B cell (primary cell): ENCODE measurements at regions of chr19 and their contacts with region 1.

Region 1: DNA sequence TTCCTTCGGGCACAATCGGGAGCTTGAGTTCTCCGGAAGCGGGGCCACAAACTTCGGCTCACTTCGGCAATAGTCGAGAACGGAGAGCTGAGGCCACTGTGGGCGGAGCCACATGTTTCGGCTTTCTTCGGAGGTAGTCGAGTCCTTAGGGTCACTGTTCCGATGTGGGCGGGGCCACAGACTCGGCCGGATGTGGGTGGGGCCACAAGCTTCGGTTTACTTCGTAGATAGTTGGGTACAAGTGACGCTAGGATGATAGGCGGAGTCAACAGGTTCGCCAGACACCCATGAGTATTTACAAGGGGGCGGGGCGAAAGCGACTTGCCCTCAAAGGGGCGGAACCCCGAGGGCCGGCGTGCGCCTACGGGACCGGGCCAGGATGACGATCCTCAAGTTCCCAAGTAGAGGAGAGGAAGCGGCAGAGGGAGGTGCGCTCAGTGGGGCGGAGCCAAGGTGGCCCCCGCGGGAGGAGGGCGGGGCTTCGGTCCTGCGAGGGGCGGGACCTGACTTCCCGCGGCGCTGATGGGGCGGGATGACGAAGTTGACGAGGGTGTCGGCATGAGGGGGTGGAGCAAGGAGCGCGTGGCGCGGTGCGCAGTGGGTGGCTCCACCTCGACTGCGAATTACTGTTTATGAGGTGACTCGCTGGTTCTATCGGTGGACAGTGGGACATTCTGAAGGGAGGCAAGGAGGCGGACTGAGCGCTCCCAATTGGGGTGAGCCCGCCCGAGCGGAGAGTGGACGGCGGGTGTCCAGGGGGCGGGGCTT is 539 bp upstream of the MBOAT7 start:
- DNase-seq: peak; percentile 100
- ATAC-seq: peak; percentile 51
- H3K4me3 ChIP-seq: peak overlapping the region; percentile 31 to 87 (median 81)
- H3K4me3 Mint-ChIP-seq: peak overlapping the region; percentile 94
- H3K27ac ChIP-seq: peak overlapping the region; percentile 96 to 99
- H3K27ac Mint-ChIP-seq: peak overlapping the region; percentile 99
- H3K4me1 ChIP-seq: peaks cover 18 to 22% of the 10 kb centered on the region in 2 donors
- H3K4me1 Mint-ChIP-seq: peaks cover 32% of the 10 kb centered on the region
- H3K27me3 ChIP-seq: no peaks in the 10 kb centered on the region
- H3K27me3 Mint-ChIP-seq: no peaks in the 10 kb centered on the region
- CTCF ChIP-seq: no peak

Region 2: DNA sequence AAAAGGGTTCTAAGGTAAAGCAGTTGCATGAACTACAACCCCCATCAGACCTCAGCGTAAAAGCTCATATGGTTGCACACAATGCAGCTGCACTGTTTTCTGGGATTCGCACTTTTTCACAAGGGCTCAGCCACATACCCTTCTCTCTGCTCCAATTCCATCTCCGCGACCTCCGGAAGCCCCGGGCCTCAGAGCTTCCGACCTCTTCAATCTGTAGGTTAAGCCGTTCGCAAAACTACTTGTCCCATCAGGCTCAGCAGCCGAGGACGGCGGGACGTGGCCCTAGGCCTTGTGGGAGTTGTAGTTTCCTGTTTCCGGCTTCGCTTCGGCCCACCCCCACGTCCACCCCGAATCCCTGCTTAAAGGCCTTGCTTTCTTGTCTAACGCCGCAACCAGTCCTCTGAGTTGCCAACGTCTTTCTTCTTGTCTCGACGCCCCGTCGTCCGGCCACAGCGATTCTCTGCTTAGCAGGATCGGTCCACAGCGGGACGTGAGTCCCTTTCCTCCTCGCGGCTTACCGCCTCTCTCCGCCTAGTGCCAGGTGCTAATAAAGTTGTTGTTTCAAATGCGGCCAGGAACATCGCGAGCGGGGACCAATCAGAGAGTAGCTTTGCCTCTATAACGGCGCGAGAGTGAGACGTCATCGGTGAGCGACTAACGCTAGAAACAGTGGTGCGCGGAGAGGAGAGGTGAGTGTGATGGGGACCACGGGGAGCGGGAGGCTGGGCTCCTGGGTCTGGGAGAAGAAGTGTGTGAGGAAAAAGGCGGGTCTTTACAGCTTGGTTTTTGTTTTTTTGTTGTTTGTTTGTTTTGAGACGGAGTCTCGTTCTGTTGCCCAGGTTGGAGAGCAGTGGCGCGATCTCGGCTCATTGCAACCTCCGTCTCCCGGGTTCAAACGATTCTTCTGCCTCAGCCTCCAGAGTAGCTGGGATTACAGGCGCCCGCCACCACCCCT is 74.5 kb before region 1 on chr19 and contains the starts of genes PRPF31 and TFPT:
- CTCF ChIA-PET with region 1: interaction called, 3 read pairs
- POLR2A ChIA-PET with region 1: interaction called, 7 read pairs
- intact Hi-C with region 1: loop called (anchors 1 kb)
- DNase-seq: peak; percentile 99
- ATAC-seq: peak; percentile 93
- H3K4me3 ChIP-seq: peak within 1 kb of the TSS; percentile 71 to 86 (median 81)
- H3K4me3 Mint-ChIP-seq: peak within 1 kb of the TSS; percentile 89
- H3K27ac ChIP-seq: peak within 1 kb of the TSS; percentile 76 to 78
- H3K27ac Mint-ChIP-seq: peak within 1 kb of the TSS; percentile 87
- H3K4me1 ChIP-seq: peaks cover 14 to 25% of the 10 kb centered on the region in 2 donors
- H3K4me1 Mint-ChIP-seq: peaks cover 31% of the 10 kb centered on the region
- H3K27me3 ChIP-seq: no peaks in the 10 kb centered on the region
- H3K27me3 Mint-ChIP-seq: no peaks in the 10 kb centered on the region
- CTCF ChIP-seq: no peak
- total RNA-seq, gene PRPF31: 65.4 and 66.2 TPM in 2 replicates
- total RNA-seq, gene TFPT: 10.4 and 12.7 TPM in 2 replicates

Region 3: DNA sequence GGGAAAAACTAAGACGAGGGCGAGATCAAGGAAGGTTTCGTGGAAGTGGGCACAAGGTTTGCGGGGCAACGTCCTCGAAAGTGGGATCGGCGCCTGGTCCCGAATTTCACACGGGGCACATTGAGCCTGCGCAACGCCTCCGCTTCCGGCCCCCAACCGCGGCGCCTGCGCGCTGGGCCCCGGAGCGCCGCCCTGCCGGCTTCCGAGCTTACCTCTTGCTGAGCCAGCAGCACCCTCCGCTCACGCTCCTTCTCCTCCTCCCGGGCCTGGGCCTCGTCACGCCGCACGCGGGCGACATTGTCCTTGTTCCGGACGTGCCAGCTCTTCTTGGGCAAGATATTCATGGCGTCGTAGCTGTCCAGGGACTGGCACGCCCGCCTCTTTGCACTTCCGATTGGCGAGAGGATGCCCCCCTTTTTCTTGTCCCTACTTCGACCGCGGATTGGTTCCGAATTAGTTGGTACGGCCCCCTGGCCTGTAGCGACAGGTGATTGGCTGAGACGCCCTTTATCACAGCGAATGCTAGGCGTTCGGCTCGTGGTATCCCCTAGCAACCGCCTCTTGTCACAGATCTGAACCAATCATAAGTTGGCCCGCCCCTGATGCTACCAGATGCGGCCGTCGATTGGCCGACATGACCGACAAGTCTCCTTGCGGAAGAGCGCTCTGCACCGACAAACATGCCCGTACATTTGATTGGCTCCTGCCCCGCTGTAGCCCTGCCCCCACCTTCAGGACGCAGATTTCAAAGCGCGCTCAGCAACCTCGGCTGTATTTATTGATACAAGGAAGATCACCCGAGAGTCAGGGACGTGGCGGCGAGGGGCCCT is 30.4 kb before region 1 on chr19 and contains the start of gene LENG1:
- CTCF ChIA-PET with region 1: interaction called, 8 read pairs
- POLR2A ChIA-PET with region 1: interaction called, 17 read pairs
- intact Hi-C with region 1: loop called (anchors 1 kb)
- DNase-seq: peak; percentile 100
- ATAC-seq: peak; percentile 87
- H3K4me3 ChIP-seq: peak within 1 kb of the TSS; percentile 67 to 95 (median 79)
- H3K4me3 Mint-ChIP-seq: peak within 1 kb of the TSS; percentile 100
- H3K27ac ChIP-seq: peak within 1 kb of the TSS; percentile 75 to 82
- H3K27ac Mint-ChIP-seq: peak within 1 kb of the TSS; percentile 100
- H3K4me1 ChIP-seq: peaks cover 35 to 48% of the 10 kb centered on the region in 2 donors
- H3K4me1 Mint-ChIP-seq: peaks cover 45% of the 10 kb centered on the region
- H3K27me3 ChIP-seq: peaks cover 0 to 6% (median 3%) of the 10 kb centered on the region in 4 experiments
- H3K27me3 Mint-ChIP-seq: peaks cover 8% of the 10 kb centered on the region
- CTCF ChIP-seq: peak; percentile 26
- total RNA-seq, gene LENG1: 13.7 and 16.5 TPM in 2 replicates

Region 4: GRCh38 chr19:54203151-54203611 is 13.3 kb after region 1 on chr19:
- CTCF ChIA-PET with region 1: interaction called, 30 read pairs
- POLR2A ChIA-PET with region 1: interaction called, 73 read pairs
- intact Hi-C with region 1: loop called (anchors 1 kb)
- DNase-seq: peak; percentile 23
- ATAC-seq: no peak
- H3K4me3 ChIP-seq: no peak overlapping the region
- H3K4me3 Mint-ChIP-seq: peak overlapping the region; percentile 96
- H3K27ac ChIP-seq: no peak overlapping the region
- H3K27ac Mint-ChIP-seq: peak overlapping the region; percentile 46
- H3K4me1 ChIP-seq: peaks cover 46 to 66% of the 10 kb centered on the region in 2 donors
- H3K4me1 Mint-ChIP-seq: peaks cover 71% of the 10 kb centered on the region
- H3K27me3 ChIP-seq: no peaks in the 10 kb centered on the region
- H3K27me3 Mint-ChIP-seq: no peaks in the 10 kb centered on the region
- CTCF ChIP-seq: no peak

Region 5: DNA sequence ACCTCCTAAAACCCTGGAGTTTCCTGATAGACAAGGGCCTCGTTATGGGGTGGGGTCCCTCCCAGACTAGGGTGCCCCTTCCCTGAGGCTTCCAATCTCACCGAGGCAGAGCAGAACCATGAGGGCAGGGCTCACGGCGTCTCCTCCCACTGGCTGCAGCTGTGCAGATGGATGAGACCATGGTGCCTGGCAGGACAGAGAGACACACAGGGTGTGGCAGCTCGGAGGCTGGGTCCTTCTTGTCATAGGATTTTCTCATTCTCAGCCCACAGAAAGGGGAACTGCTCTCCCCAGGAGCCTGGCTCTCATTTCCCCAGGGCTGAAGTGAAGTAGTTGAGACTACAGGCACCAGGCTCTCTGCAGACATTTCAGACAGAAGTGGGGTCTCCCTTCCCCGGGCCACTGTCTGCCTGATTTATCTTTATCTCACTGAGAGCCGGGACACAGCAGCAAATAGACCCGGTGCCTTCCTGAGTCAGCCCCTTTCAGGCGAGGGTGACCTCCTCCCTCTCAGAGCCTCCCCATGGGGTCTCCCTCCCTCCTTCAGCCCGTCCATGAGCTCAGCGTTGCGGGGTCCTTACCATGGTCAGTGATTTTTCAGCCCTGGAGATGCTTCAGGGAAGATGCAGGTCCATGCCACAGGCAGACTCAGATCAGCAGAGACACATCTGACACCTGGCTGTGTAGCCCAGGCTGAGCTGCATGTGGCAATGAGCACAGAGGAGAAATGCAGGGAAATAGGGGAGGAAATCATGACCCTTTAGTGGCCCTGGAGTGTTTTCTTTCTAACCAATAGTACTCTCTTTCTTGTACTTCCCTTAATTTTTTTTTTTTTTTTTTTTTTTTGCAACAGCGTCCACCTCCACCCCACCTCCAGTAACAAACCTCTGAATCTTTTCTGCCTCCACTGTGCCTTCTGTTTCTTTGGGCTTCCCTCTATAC is 122.8 kb after region 1 on chr19 and contains the start of gene LILRA5:
- CTCF ChIA-PET with region 1: no interaction called
- POLR2A ChIA-PET with region 1: no interaction called
- intact Hi-C with region 1: no loop called
- DNase-seq: peak; percentile 63
- ATAC-seq: peak; percentile 73
- H3K4me3 ChIP-seq: peak within 1 kb of the TSS in 1 of 5 experiments; percentile 55
- H3K4me3 Mint-ChIP-seq: no peak within 1 kb of the TSS
- H3K27ac ChIP-seq: no peak within 1 kb of the TSS
- H3K27ac Mint-ChIP-seq: peak within 1 kb of the TSS; percentile 32
- H3K4me1 ChIP-seq: peaks cover 14 to 16% of the 10 kb centered on the region in 2 donors
- H3K4me1 Mint-ChIP-seq: peaks cover 15% of the 10 kb centered on the region
- H3K27me3 ChIP-seq: peaks cover 0 to 44% (median 26%) of the 10 kb centered on the region in 4 experiments
- H3K27me3 Mint-ChIP-seq: peaks cover 39% of the 10 kb centered on the region
- CTCF ChIP-seq: no peak
- total RNA-seq, gene LILRA5: 0.46 TPM in 1 of 2 replicates, not detected in the other

Region 6: DNA sequence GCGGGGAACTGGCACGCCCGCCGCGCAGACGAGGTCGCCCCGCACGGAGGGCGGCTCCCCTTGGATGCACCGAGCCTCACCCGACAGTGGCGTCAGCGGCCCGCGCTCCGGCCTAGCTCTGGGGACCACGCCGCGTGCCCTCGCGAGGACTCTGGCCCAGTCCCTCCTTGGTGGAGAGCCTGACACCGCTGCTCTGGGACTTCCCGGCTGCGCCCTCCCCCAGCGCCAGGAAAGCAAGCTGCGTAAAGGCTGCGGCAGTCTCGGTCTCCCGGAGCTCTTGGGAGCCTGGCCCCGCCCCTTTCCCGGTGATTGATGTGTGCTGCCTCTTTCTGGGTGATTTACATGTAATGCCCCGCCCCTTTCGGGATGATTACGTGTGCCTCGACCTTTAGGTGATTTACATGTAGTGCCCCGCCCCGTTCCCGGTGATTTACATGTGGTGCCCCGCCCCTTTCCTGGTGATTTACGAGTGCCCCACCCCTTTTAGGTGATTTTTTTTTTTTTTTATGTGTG is 273.7 kb after region 1 on chr19 and contains the start of gene LENG9:
- CTCF ChIA-PET with region 1: no interaction called
- POLR2A ChIA-PET with region 1: no interaction called
- intact Hi-C with region 1: loop called (anchors 1 kb)
- DNase-seq: no peak
- ATAC-seq: peak; percentile 62
- H3K4me3 ChIP-seq: peak within 1 kb of the TSS; percentile 65 to 88 (median 74)
- H3K4me3 Mint-ChIP-seq: peak within 1 kb of the TSS; percentile 91
- H3K27ac ChIP-seq: peak within 1 kb of the TSS; percentile 84 to 85
- H3K27ac Mint-ChIP-seq: peak within 1 kb of the TSS; percentile 93
- H3K4me1 ChIP-seq: peaks cover 16 to 29% of the 10 kb centered on the region in 2 donors
- H3K4me1 Mint-ChIP-seq: peaks cover 23% of the 10 kb centered on the region
- H3K27me3 ChIP-seq: peaks cover 0 to 3% (median 0%) of the 10 kb centered on the region in 4 experiments
- H3K27me3 Mint-ChIP-seq: peaks cover 6% of the 10 kb centered on the region
- CTCF ChIP-seq: no peak
- total RNA-seq, gene LENG9: 6.6 and 6.9 TPM in 2 replicates